PC-3 (cell line): ENCODE measurements at regions of chr1 and their contacts with region 1.

Region 1: DNA sequence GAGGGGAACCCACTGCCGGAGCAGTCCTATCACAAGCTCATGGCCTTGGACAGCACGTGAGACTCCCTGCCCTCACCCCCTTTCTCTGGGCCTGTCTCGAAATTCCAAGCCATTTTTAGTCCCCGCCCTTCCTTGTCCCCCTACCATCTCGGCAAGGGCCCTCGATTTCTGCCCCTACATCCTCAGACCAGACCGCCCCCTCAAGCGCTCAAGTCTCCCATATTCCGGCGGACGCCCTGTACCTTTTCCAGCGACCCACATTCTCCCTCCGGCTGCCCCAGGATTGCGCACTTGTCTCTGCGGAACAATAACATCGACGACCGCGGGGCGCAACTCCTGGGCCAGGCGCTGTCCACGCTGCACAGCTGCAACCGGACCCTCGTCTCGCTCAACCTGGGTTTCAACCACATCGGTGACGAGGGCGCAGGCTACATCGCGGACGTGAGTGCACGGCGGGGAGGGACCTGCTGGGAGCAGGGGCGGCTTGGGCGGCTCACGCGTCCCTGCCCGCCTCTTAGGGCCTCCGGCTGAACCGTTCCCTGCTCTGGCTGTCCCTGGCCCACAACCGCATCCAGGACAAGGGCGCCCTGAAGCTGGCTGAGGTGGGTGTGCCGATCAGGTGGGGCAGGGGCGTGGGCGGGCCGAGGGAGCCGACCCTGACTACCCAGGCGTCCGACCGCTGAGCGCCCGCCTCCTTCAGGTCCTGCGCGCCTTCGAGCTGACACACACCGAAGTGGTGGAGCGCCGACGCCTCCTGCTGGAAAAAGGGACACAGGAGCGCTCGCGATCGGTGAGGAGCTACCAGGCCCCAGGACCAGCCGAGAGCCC is 7.0 kb downstream of the LRRC71 start:
- DNase-seq: peak; percentile 91
- ATAC-seq: peak; percentile 84
- H3K4me3 ChIP-seq: peak overlapping the region; percentile 72
- H3K27ac ChIP-seq: no peak overlapping the region
- H3K4me1 ChIP-seq: peaks cover 25% of the 10 kb centered on the region
- H3K27me3 ChIP-seq: no peaks in the 10 kb centered on the region
- CTCF ChIP-seq: peak; percentile 93

Region 2: DNA sequence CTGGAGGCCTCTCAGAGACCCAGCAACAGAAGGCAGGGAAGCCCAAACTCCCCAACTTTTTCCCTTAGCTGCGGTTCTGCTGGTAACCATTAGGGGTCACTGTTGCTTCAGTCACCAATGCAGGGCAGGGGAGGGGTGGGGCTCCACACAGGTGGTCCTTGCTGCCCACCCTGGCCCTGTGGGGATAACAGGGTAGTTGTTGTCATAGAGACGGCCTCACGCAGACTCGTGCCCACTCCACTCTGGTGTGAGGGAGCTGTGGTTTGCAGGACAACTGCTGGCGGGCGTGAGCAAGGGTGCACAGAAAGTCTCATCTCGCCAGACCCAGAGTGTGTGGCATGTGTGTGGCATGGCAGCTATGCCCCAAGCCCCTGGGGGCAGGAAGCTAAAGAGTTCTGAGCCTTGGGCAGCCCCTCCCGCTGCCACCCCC is 88.4 kb before region 1 on chr1:
- CTCF ChIA-PET with region 1: interaction called, 13 read pairs
- POLR2A ChIA-PET with region 1: no interaction called
- intact Hi-C with region 1: loop called (anchors 2 kb)
- DNase-seq: peak; percentile 67
- ATAC-seq: peak; percentile 71
- H3K4me3 ChIP-seq: no peak overlapping the region
- H3K27ac ChIP-seq: no peak overlapping the region
- H3K4me1 ChIP-seq: no peaks in the 10 kb centered on the region
- H3K27me3 ChIP-seq: no peaks in the 10 kb centered on the region
- CTCF ChIP-seq: peak; percentile 98

Region 3: DNA sequence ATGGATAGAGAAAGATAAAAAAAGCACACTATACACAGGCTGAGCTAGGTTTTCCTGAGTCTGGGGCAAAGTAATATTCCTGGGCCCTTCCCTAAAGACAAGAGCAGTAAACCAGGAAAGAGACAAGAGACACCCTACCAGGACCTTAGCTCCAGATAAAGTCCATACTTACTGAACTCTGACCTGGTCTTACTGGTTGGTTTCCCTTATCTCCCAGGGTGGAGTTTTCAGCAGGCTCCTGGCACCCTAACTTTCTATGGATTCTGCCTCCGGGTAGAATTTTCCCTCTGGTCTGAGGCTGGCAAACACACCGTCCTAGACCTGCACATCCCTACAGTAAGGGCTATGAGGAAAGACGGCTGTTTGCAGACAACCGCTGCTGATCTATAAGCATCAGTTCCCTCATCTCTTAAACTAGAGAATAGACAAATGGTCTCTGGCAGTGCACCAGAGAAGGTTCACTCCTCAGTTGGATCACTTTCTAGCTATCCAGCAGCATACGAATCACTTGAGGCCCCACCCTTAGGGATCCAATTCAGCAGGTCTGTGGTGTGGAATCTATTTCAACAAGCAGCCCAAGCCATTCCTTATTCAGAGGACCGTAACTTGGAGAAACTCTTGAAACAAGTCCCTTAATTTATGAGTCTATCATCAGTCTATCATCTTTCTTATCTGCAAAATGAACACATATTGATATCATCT is 66.2 kb after region 1 on chr1:
- CTCF ChIA-PET with region 1: no interaction called
- POLR2A ChIA-PET with region 1: no interaction called
- intact Hi-C with region 1: no loop called
- DNase-seq: peak; percentile 26
- ATAC-seq: peak; percentile 58
- H3K4me3 ChIP-seq: no peak overlapping the region
- H3K27ac ChIP-seq: no peak overlapping the region
- H3K4me1 ChIP-seq: peaks cover 6% of the 10 kb centered on the region; the same call in 1 of the 2 replicates
- H3K27me3 ChIP-seq: no peaks in the 10 kb centered on the region
- CTCF ChIP-seq: no peak